BJ (cell line): ENCODE measurements at regions of chr1 and their contacts with region 1.

Region 1: DNA sequence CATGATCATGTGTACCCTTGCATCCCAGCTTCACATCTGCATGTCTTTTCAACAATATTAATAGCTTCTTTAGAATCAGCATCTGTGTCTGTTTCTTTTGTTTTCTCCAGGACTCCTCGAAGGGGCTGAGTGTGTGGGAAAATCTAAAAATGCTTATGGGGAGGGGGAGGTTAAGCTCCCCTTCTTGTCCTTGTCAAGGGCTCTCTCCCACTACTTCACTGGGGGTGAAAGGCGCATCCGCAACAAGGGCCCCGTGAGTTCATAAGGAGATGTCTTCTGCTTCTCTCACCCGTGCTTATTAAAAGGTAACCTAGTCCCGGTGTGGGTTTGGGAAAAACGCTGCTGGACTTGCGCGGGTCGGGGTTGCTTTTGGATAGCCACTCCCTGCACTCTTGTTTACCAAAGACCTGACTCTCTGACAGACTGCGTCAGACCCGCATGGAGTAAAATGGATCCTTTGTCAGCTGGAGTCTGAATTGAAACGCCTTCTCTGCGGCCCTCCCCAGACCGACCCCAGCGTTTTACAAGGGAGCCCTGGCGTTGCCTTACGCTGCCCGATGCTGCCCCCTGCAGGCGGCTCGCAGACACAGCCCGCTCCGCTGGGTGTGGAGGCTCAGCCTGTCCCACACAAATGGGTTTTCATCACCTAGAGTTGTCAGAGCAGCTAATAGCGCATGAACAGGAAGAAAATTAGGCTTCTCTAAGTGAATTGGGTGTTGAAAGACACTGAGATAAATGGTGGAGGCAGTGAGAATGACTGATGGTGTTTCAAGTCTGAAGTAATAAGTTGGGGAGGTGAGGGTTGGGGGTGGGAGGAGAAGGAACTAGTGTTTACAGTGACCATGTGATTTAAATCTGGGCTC is 53.8 kb downstream of the IER5 start:
- DNase-seq: peak; percentile 23
- H3K4me3 ChIP-seq: 0 out of 2 replicates have a peak overlapping the region, but pooled peaks have one; percentile 3
- H3K27me3 ChIP-seq: no peaks in the 10 kb centered on the region
- CTCF ChIP-seq: peak; percentile 98

Region 2: GRCh38 chr1:180881806-180882509 is 260.4 kb before region 1 on chr1:
- CTCF ChIA-PET with region 1: interaction called, 78 read pairs
- POLR2A ChIA-PET with region 1: no interaction called
- DNase-seq: no peak
- H3K4me3 ChIP-seq: no peak overlapping the region
- H3K27me3 ChIP-seq: no peaks in the 10 kb centered on the region
- CTCF ChIP-seq: peak; percentile 53

Region 3: DNA sequence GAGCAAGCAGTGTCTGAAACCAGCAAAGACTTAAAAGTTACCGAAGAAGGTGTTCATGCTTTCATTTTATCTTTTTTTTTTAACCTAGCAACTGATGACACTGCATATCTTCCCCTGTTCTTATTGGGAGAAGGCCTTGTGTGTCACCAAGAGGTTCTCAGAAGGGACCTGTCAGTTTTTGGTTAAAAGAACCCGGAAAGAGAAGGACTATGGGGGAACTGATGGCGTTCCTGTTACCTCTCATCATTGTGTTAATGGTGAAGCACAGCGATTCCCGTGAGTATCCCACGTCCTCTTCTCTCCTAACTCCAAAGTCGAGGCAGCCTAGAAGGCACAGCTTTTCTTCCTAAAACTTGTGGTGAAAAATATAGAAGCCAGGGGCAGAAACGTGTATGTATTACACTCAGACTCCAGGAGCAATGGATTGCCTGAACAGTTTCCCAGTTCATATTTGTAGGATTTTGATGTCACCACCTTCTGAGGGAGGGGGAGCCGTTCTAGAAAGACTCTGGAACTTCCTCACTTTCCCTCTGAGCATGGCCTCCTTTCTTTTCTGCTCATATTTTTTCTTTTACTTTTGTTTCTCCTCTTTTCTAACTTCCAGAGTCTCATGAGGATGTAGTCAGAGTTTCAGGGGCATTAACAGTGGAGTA is 108.4 kb before region 1 on chr1 and contains the start of gene MR1:
- CTCF ChIA-PET with region 1: interaction called, 130 read pairs
- POLR2A ChIA-PET with region 1: no interaction called
- DNase-seq: peak; percentile 83
- H3K4me3 ChIP-seq: peak within 1 kb of the TSS; percentile 47
- H3K27me3 ChIP-seq: no peaks in the 10 kb centered on the region
- CTCF ChIP-seq: no peak
- polyA plus RNA-seq, gene MR1: 25.0 and 36.2 TPM in 2 replicates

Region 4: GRCh38 chr1:181079382-181079781 is 62.9 kb before region 1 on chr1:
- CTCF ChIA-PET with region 1: interaction called, 46 read pairs
- POLR2A ChIA-PET with region 1: no interaction called
- DNase-seq: no peak
- H3K4me3 ChIP-seq: no peak overlapping the region
- H3K27me3 ChIP-seq: no peaks in the 10 kb centered on the region
- CTCF ChIP-seq: no peak

Region 5: GRCh38 chr1:181105134-181106021 is 36.9 kb before region 1 on chr1:
- CTCF ChIA-PET with region 1: interaction called, 17 read pairs
- POLR2A ChIA-PET with region 1: no interaction called
- DNase-seq: no peak
- H3K4me3 ChIP-seq: peak overlapping the region; percentile 78
- H3K27me3 ChIP-seq: no peaks in the 10 kb centered on the region
- CTCF ChIP-seq: no peak

Region 6: DNA sequence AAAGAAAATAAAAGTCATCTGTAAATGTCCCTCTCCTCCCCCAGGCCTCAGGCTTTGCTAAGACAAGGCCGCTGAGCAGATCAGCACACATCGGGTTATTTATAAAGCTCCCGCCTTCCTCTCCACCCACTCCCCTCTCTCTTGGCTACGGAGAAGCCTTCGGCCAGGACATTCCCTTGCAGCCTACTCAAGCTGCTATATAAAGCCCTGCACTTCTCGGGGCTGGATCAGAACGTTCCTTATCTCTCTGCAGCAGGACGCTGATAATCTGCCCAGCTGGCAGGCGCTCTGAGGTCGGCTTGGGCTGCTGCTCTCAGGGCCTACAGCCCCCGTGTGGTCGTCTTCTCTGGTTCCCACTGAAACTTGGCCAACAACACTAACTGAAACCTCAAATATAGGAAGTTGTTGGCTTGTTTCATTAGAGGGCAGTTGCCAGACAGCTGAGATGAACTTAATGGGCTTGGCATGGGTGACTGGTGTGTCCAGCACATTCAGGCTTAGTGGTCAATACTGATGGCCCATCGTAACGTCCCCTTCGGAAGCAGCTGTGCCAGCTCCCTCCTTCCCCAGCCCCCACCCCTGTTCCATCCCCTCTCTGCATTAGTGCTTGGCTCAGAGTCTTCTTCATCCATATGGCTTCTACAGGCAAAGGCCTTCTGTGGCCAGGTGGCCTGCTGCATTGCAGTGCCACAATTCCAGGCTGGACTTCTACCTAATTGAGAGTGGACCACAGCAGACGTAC is 10.7 kb after region 1 on chr1:
- CTCF ChIA-PET with region 1: interaction called, 36 read pairs
- POLR2A ChIA-PET with region 1: no interaction called
- DNase-seq: no peak
- H3K4me3 ChIP-seq: no peak overlapping the region
- H3K27me3 ChIP-seq: no peaks in the 10 kb centered on the region
- CTCF ChIP-seq: peak; percentile 43

Region 7: GRCh38 chr1:181219938-181220337 is 77.6 kb after region 1 on chr1:
- CTCF ChIA-PET with region 1: no interaction called
- POLR2A ChIA-PET with region 1: no interaction called
- DNase-seq: no peak
- H3K4me3 ChIP-seq: no peak overlapping the region
- H3K27me3 ChIP-seq: no peaks in the 10 kb centered on the region
- CTCF ChIP-seq: no peak